ENCODE measurements at regions of chr5 and their contacts with region 1.

Region 1: GRCh38 chr5:72319976-72320752 is at the starts of genes MRPS27 and PTCD2:
- DNase-seq: peak; percentile 80 to 98 (median 94)
- ATAC-seq: peak; percentile 99 to 100 (median 100)
- H3K4me3 ChIP-seq: peak within 1 kb of the TSS; percentile 80 to 96
- H3K4me3 Mint-ChIP-seq: peak within 1 kb of the TSS; percentile 97 to 100 (median 98)
- H3K27ac ChIP-seq: peak within 1 kb of the TSS; percentile 57
- H3K27ac Mint-ChIP-seq: peak within 1 kb of the TSS; percentile 93 to 98
- H3K4me1 ChIP-seq: peaks cover 3 to 17% of the 10 kb centered on the region in 2 experiments
- H3K4me1 Mint-ChIP-seq: peaks cover 39 to 51% (median 41%) of the 10 kb centered on the region in 3 donors
- H3K27me3 ChIP-seq: no peaks in the 10 kb centered on the region
- H3K27me3 Mint-ChIP-seq: no peaks in the 10 kb centered on the region
- total RNA-seq, gene MRPS27: 34.4 to 43.3 (median 39.7) TPM
- total RNA-seq, gene PTCD2: 5.9 to 12.1 (median 8.1) TPM

Region 2: GRCh38 chr5:72228960-72229359 is 91.2 kb before region 1 on chr5:
- CTCF ChIA-PET with region 1: no interaction called
- POLR2A ChIA-PET with region 1: interaction called in 1 of 2 experiments, 15 read pairs
- DNase-seq: no peak
- ATAC-seq: no peak
- H3K4me3 ChIP-seq: no peak overlapping the region
- H3K4me3 Mint-ChIP-seq: no peak overlapping the region
- H3K27ac ChIP-seq: no peak overlapping the region
- H3K27ac Mint-ChIP-seq: no peak overlapping the region
- H3K4me1 ChIP-seq: peaks cover 14% of the 10 kb centered on the region in 2 experiments
- H3K4me1 Mint-ChIP-seq: peaks cover 23 to 31% (median 26%) of the 10 kb centered on the region in 3 donors
- H3K27me3 ChIP-seq: no peaks in the 10 kb centered on the region
- H3K27me3 Mint-ChIP-seq: no peaks in the 10 kb centered on the region

Region 3: DNA sequence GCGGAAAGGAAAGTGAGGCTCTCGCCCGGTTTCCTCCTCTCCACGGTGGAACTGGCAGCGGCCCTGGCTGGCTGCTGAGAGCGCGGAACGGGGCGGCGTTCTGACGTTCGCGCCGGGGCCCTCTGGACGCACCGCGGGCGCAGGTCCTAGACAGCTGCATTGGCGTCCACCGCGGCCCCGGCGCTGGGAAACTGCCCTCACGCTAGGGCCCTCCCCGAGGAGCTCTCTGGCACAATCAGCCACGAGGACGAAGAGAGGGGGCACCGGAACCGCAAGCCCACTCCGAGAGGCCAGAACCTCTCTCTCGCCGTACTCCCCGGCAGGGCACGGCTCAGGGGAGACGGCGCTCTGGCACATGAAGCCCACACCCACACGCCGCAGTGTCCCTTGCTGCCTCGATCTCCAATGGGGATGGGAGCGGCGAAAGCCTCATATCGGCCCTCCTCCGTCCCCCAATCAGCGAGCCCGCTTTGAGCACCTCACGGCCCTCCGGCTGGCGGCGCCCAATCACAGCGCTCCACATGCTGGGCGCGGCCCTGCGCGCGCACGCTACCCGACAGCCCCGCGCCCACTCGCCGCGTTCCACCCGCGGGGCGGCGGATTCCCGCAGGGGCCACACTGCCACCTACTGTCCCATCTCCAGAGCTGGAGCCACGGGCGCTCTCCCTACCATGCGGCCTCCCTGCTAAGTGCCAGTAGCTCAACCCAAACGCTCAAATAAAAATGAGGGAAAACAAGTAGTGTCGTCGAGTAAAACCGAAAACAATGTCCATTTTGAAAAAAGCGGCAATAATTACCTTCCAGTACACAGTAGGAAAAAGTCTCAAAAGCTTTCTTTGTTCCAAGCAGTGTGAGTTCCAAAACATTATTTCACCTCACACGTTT is 12.0 kb before region 1 on chr5:
- CTCF ChIA-PET with region 1: interaction called, 6 to 55 read pairs
- POLR2A ChIA-PET with region 1: interaction called, 5 to 28 read pairs
- DNase-seq: peak; percentile 78 to 98 (median 94)
- ATAC-seq: peak; percentile 96 to 99 (median 98)
- H3K4me3 ChIP-seq: peak overlapping the region; percentile 85 to 88
- H3K4me3 Mint-ChIP-seq: peak overlapping the region; percentile 84 to 91 (median 88)
- H3K27ac ChIP-seq: peak overlapping the region; percentile 89
- H3K27ac Mint-ChIP-seq: peak overlapping the region; percentile 85 to 91
- H3K4me1 ChIP-seq: peaks cover 3 to 14% of the 10 kb centered on the region in 2 experiments
- H3K4me1 Mint-ChIP-seq: peaks cover 27 to 36% (median 35%) of the 10 kb centered on the region in 3 donors
- H3K27me3 ChIP-seq: no peaks in the 10 kb centered on the region
- H3K27me3 Mint-ChIP-seq: no peaks in the 10 kb centered on the region

Region 4: DNA sequence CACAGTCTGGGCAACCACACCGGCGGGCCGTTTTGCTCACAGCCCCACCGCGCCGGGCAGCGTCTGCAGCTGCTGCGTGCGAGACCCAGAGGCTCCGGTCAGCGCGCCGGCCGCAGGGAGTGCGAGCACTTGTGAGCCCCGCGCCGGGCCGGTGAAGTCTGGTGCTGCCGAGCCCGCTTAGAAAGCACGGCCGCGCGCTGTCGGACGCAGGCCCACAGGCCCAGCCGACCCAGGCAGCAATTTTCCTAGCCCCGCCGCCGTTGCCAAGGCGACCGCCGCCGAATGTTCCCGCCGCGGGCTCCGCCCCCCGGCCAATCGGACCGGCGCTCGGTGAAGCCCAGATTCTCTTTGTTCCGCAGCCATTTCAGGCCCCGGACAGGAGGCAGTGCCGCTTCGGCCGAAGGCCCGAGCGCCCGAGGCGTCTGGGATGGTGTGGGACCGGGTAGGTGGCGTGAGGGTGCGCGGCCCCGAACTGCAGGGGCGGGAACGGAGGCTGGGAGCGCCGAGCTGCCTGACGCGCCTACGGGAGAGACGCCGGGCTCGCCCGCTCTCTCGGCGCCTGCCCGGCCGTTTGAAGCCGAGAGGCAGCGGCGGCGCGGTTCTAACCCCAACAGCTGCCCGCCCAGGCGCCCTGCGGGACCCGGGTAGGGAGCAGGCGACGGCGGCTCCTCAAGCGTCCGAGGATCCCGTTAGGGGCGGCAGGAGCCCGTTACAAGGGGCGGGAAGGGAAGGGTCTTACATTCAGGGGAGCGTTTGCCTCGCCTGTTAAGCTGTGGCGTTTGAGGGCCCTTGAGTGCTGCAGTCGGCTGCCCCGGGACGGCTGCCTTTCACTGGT is 496.4 kb after region 1 on chr5 and contains the start of gene TNPO1:
- CTCF ChIA-PET with region 1: interaction called in 1 of 2 experiments, 5 read pairs
- POLR2A ChIA-PET with region 1: interaction called in 1 of 2 experiments, 22 read pairs
- DNase-seq: peak; percentile 63 to 90 (median 77)
- ATAC-seq: peak; percentile 78 to 82 (median 82)
- H3K4me3 ChIP-seq: peak within 1 kb of the TSS; percentile 80 to 90
- H3K4me3 Mint-ChIP-seq: peak within 1 kb of the TSS; percentile 91 to 96 (median 94)
- H3K27ac ChIP-seq: peak within 1 kb of the TSS; percentile 84
- H3K27ac Mint-ChIP-seq: peak within 1 kb of the TSS; percentile 84 to 88
- H3K4me1 ChIP-seq: peaks cover 9% of the 10 kb centered on the region in 2 experiments
- H3K4me1 Mint-ChIP-seq: peaks cover 24 to 26% (median 26%) of the 10 kb centered on the region in 3 donors
- H3K27me3 ChIP-seq: peaks cover 0 to 4% of the 10 kb centered on the region in 2 experiments
- H3K27me3 Mint-ChIP-seq: peaks cover 12 to 14% of the 10 kb centered on the region in 2 donors
- total RNA-seq, gene TNPO1: 66.3 to 79.0 (median 67.8) TPM

Measured in T-cell (primary cell).